ENCODE measurements at regions of chr9 and their contacts with region 1.

Region 1: DNA sequence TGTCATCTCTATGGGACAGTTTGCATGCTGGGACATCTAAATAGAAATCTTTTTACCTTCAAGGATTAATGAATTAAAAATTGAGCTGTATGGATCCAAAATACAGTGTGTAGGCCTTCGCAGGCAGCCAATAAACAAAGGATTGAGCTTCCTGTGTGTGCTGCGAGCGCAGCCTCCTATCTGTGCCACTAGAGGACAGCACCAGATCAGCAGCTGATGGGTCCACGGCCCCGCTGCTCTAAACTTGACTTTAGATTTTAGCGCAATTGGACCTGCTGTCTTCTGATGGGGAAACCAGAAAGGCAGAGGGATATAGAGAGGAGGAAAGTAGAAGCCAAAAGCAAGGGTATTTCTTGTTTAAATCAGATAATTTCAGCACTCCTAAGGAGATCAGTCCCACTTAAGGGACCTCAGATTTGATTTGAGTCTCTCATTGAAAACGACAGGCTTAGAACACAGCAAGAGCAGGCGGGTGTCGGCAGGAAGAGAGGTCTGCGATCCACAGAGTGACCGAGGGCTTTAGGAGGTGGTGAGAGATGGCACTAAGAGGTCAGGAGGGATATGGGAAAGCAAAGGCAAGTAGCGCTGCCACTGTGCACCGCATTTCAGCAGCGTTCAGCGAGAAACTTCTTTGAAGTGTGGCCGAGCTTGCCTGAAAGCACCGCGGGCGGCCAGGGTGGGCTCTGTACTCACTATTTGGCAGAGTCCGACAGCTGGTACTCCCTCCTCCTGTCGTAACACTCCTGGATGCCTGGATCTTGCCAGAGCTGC is 214.3 kb downstream of the GNA14 start:
- DNase-seq: peak; percentile 85
- H3K4me3 ChIP-seq: no peak overlapping the region; a peak in 1 of 4 replicates
- H3K27ac ChIP-seq: no peak overlapping the region
- H3K4me1 ChIP-seq: peaks cover 11 to 13% of the 10 kb centered on the region in 2 experiments; a peak in 2 of 4 replicates
- H3K27me3 ChIP-seq: no peaks in the 10 kb centered on the region
- CTCF ChIP-seq: peak; percentile 99
- EP300 ChIP-seq: no peak
- RAD21 ChIP-seq: peak; percentile 100

Region 2: GRCh38 chr9:77163884-77164283 is 270.0 kb before region 1 on chr9:
- CTCF ChIA-PET with region 1: interaction called, 14 read pairs
- POLR2A ChIA-PET with region 1: no interaction called
- DNase-seq: no peak
- H3K4me3 ChIP-seq: no peak overlapping the region
- H3K27ac ChIP-seq: no peak overlapping the region
- H3K4me1 ChIP-seq: no peaks in the 10 kb centered on the region; a peak in 1 of 4 replicates
- H3K27me3 ChIP-seq: no peaks in the 10 kb centered on the region
- CTCF ChIP-seq: no peak
- EP300 ChIP-seq: no peak
- RAD21 ChIP-seq: no peak

Region 3: DNA sequence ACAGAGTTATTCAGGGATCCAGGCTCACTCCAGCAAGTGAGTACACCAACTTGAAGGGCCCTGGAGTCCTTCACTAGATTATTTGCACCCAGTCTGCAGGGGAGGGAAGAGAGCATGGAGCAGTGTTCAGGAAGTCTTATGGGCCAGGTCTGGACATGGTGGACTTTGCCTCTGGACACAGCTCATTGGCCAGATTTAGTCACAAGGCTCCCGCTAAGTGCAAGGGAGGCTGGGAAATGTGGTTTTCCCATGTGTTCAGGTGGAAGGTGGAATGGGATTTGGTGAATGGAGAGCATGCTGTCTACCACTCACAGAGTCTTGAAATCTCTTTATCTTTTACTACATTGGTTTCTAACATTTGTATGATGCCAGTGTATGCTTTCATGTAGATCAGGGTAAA is 13.8 kb after region 1 on chr9:
- CTCF ChIA-PET with region 1: interaction called, 147 read pairs
- POLR2A ChIA-PET with region 1: no interaction called
- DNase-seq: no peak
- H3K4me3 ChIP-seq: no peak overlapping the region
- H3K27ac ChIP-seq: no peak overlapping the region
- H3K4me1 ChIP-seq: peaks cover 0 to 6% of the 10 kb centered on the region in 2 experiments; a peak in 1 of 4 replicates
- H3K27me3 ChIP-seq: no peaks in the 10 kb centered on the region
- CTCF ChIP-seq: no peak
- EP300 ChIP-seq: no peak
- RAD21 ChIP-seq: no peak

Region 4: GRCh38 chr9:77841739-77842386 is 408.0 kb after region 1 on chr9:
- CTCF ChIA-PET with region 1: interaction called, 10 read pairs
- POLR2A ChIA-PET with region 1: no interaction called
- DNase-seq: no peak
- H3K4me3 ChIP-seq: no peak overlapping the region
- H3K27ac ChIP-seq: peak overlapping the region in 1 of 2 experiments; percentile 50; a peak in 1 of 4 replicates
- H3K4me1 ChIP-seq: peaks cover 17 to 42% of the 10 kb centered on the region in 2 experiments
- H3K27me3 ChIP-seq: no peaks in the 10 kb centered on the region
- CTCF ChIP-seq: peak; percentile 60
- EP300 ChIP-seq: no peak
- RAD21 ChIP-seq: peak; percentile 41

Region 5: GRCh38 chr9:78121488-78121887 is 687.6 kb after region 1 on chr9:
- CTCF ChIA-PET with region 1: interaction called, 26 read pairs
- POLR2A ChIA-PET with region 1: no interaction called
- DNase-seq: peak; percentile 39
- H3K4me3 ChIP-seq: no peak overlapping the region
- H3K27ac ChIP-seq: no peak overlapping the region
- H3K4me1 ChIP-seq: no peaks in the 10 kb centered on the region; a peak in 1 of 4 replicates
- H3K27me3 ChIP-seq: no peaks in the 10 kb centered on the region
- CTCF ChIP-seq: peak; percentile 74
- EP300 ChIP-seq: no peak
- RAD21 ChIP-seq: peak; percentile 89

Measured in SK-N-SH (cell line).